PC-3 (cell line): ENCODE measurements at regions of chr1 and their contacts with region 1.

Region 1: DNA sequence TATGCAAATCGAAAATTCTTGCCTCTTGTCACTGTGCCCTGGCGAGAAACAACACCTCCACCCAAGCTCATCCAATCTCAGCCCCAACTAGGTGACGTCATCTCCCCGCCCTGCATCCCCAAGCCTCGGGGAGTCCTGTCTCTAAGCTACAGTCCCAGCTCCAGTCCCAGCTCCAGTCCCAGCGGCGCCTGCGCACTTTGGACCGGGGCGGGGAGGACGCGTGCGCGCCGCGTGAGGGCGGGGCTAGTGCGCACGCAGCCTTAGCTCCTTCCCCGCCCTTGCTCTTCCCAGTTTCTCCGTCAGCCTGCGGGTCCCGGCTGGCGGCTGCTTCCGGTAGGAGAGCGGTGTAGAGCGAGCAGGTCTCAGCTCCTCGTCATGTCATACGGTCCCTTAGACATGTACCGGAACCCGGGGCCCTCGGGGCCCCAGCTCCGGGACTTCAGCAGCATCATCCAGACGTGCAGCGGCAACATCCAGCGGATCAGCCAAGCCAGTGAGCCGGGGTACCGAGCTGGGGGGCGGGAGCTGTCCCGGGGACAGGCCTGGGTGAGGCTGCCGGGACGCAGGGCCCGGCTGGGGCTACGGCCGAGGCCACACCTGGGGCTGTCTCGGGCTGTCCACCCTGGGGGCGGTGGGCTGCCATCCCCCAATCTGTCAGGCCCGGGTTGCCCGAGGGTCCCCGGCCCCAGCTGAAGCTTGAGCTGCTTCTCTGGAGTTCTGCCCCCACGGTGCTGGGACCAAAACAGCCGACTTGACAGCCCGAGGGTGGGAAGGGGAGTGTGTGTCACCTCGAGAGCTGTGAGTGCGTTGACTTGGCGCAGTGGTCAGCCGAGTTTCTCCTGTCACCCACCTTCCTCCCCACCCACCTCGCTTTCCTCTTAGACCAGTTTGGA is at the start of gene STX12:
- DNase-seq: peak; percentile 99
- ATAC-seq: peak; percentile 95
- H3K4me3 ChIP-seq: peak within 1 kb of the TSS; percentile 79
- H3K27ac ChIP-seq: no peak within 1 kb of the TSS
- H3K4me1 ChIP-seq: peaks cover 19% of the 10 kb centered on the region
- H3K27me3 ChIP-seq: no peaks in the 10 kb centered on the region
- CTCF ChIP-seq: no peak
- total RNA-seq, gene STX12: 18.6 and 28.5 TPM in 2 replicates

Region 2: DNA sequence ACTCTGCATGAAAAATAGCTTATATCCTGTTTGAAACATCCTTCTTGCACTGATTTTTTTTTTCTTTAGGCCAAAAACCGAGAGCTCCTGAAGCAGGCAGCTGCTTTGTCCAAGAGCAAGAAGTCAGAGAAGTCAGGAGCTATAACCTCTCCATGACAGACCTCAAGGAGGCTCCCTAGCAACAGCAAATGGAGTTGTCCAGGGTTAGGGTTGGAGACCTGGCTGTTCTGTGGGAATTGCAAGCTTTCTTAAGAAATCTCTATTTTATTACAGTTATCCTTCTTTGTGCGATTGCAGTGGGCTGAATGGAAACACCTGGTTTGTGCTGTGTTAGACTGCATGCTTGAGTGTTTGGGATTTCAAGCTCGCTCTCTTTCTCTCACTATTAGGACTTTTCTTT is 12.8 kb before region 1 on chr1:
- CTCF ChIA-PET with region 1: no interaction called
- POLR2A ChIA-PET with region 1: interaction called, 26 read pairs
- intact Hi-C with region 1: no loop called
- DNase-seq: no peak
- ATAC-seq: no peak
- H3K4me3 ChIP-seq: no peak overlapping the region
- H3K27ac ChIP-seq: no peak overlapping the region
- H3K4me1 ChIP-seq: no peaks in the 10 kb centered on the region
- H3K27me3 ChIP-seq: no peaks in the 10 kb centered on the region
- CTCF ChIP-seq: no peak